ENCODE measurements at regions of chr1 and their contacts with region 1.

Region 1: GRCh38 chr1:181424786-181425403 is 58.4 kb upstream of the CACNA1E start:
- DNase-seq: peak; percentile 57 to 77
- ATAC-seq: peak; percentile 74 to 87 (median 78)
- H3K4me3 ChIP-seq: no peak overlapping the region
- H3K27ac ChIP-seq: no peak overlapping the region
- H3K4me1 ChIP-seq: no peaks in the 10 kb centered on the region
- H3K27me3 ChIP-seq: peaks cover 0 to 6% (median 0%) of the 10 kb centered on the region in 3 donors
- CTCF ChIP-seq: peak; percentile 96

Region 2: GRCh38 chr1:180888870-180889269 is 536.0 kb before region 1 on chr1:
- intact Hi-C with region 1: no loop called
- DNase-seq: no peak
- ATAC-seq: no peak
- H3K4me3 ChIP-seq: no peak overlapping the region
- H3K27ac ChIP-seq: no peak overlapping the region
- H3K4me1 ChIP-seq: no peaks in the 10 kb centered on the region
- H3K27me3 ChIP-seq: no peaks in the 10 kb centered on the region
- CTCF ChIP-seq: no peak

Region 3: DNA sequence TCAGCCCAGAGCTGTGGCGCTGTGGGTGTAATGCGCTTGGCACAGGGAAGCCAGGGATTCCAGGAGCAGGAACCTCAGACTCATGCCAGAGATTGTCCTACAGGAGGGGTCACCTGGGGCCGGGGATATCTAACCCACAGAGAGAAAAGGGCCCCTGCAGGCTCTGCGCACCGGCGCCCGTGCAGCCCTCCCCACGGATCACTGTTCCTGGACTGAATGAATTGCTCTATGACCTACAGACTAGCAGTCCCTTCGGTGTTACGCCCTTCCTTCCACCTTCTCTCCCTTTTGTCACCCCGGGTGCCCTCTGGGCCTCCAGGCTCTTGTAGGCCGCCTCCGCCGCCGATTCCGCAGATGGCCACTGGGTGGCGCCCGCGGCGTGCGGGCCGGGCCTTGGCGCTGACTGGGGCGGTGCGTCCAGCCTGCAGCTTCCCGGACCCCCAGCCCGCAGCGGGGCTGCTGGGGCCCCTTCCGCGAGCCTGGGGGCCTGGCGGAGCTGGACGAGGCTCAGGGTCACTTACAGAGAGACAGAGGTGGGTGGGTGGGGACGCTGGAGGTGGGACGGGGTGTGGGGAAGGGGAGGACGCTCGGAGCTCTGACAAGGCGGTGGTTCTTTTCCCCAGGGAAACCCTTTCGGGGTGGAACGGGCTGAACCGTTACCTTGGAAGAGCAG is 235.1 kb before region 1 on chr1:
- intact Hi-C with region 1: loop called (anchors 1 to 2 kb)
- DNase-seq: peak; percentile 65 to 80
- ATAC-seq: peak; percentile 92 to 99 (median 95)
- H3K4me3 ChIP-seq: peak overlapping the region; percentile 43
- H3K27ac ChIP-seq: no peak overlapping the region
- H3K4me1 ChIP-seq: peaks cover 2% of the 10 kb centered on the region
- H3K27me3 ChIP-seq: no peaks in the 10 kb centered on the region
- CTCF ChIP-seq: peak; percentile 99

Region 4: GRCh38 chr1:181251001-181251712 is 173.7 kb before region 1 on chr1:
- intact Hi-C with region 1: loop called in 1 of 2 experiments (anchors 5 kb)
- DNase-seq: no peak
- ATAC-seq: no peak
- H3K4me3 ChIP-seq: no peak overlapping the region
- H3K27ac ChIP-seq: no peak overlapping the region
- H3K4me1 ChIP-seq: peaks cover 3% of the 10 kb centered on the region
- H3K27me3 ChIP-seq: no peaks in the 10 kb centered on the region
- CTCF ChIP-seq: no peak

Region 5: GRCh38 chr1:181469829-181470228 is 44.9 kb after region 1 on chr1:
- intact Hi-C with region 1: no loop called
- DNase-seq: no peak
- ATAC-seq: no peak
- H3K4me3 ChIP-seq: no peak overlapping the region
- H3K27ac ChIP-seq: no peak overlapping the region
- H3K4me1 ChIP-seq: no peaks in the 10 kb centered on the region
- H3K27me3 ChIP-seq: peaks cover 0 to 8% (median 0%) of the 10 kb centered on the region in 3 donors
- CTCF ChIP-seq: no peak

Region 6: DNA sequence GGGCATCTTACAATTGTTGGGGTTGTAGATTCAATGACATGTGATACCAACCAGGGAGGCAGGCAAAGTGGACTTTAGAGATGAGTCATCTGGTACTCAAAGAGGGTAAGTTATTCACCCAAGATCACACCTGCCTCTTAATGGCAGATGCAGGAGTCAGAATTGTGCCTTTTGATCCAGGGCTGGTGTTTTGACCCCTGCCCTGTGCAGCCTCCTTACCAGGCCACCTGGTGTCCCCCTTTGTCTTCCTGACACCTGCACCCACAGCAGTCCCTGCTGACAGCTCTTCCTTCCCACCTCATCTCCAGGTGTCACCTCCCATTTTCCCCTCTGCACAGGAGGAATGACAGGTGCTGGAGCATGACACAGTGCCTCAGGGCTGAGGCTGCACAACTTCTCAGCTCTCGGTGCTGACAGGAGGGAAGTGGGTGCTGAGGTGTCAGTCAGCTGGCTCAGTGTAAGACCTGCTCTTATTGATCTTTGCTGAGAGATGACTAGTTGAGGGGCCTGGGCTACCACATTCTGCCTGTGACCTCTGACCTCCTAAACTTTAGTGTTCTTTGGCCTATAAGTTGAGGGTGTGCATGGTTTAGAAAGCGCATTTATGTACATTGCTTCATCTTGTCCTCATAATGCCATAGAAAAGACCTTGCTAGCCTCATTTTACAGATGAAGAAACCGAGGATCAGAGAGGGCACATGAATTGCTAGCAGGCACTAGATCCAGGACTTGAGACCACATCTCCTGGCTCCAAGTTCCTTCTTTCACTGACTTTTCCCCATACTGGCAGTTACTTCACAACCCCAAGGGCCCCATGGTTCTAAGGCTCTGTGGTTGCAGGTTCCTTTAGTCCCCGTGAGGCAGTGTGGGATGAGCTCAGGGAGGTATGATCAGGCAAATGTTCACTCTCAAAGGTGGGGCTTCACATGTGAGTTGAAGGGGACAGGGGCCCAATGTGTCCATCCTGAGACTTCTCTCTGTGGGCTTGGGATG is 89.7 kb after region 1 on chr1:
- intact Hi-C with region 1: no loop called
- DNase-seq: no peak
- ATAC-seq: no peak
- H3K4me3 ChIP-seq: no peak overlapping the region
- H3K27ac ChIP-seq: no peak overlapping the region
- H3K4me1 ChIP-seq: no peaks in the 10 kb centered on the region
- H3K27me3 ChIP-seq: peaks cover 0 to 4% (median 0%) of the 10 kb centered on the region in 3 donors
- CTCF ChIP-seq: no peak